Activated CD8-positive, alpha-beta T cell treated with anti-CD3 and anti-CD28 coated beads for 36 hours (primary cell): ENCODE measurements at regions of chr9 and their contacts with region 1.

Region 1: DNA sequence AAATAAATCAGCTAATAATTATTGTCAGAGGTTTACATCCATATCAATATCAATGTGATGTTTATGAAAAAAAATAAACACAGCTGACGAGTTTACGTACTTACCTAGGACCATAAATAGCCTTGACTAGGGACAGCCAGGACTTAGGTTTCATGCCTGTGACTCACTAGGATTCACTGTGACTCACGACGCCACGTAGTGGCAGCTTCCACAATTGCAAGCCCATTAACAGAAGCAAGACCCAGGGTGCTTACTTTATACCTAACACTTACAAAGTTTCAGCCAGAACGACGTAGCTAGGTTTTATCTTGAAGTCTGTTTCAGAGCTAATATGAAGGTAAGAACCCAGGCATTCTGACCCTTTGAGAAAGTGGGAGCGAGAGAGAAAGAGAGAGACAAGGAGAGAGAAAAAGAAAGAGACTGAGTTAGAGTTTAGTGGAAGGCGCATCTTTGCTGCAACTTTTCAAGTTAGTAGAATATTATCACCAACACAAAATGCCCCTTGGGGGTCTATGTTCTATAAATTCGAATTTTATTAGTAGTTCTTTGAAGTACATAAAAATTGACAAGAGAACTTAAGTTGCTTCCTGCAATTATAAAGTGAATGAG is 191.2 kb downstream of the GNA14 start:
- DNase-seq: peak; percentile 95
- ATAC-seq: peak; percentile 93
- H3K4me3 Mint-ChIP-seq: no peak overlapping the region
- H3K27ac Mint-ChIP-seq: no peak overlapping the region
- H3K4me1 Mint-ChIP-seq: peaks cover 13% of the 10 kb centered on the region
- H3K27me3 Mint-ChIP-seq: no peaks in the 10 kb centered on the region
- CTCF ChIP-seq: peak; percentile 84

Region 2: GRCh38 chr9:77194423-77194822 is 262.5 kb before region 1 on chr9:
- CTCF ChIA-PET with region 1: no interaction called
- POLR2A ChIA-PET with region 1: no interaction called
- intact Hi-C with region 1: no loop called
- DNase-seq: no peak
- ATAC-seq: no peak
- H3K4me3 Mint-ChIP-seq: no peak overlapping the region
- H3K27ac Mint-ChIP-seq: no peak overlapping the region
- H3K4me1 Mint-ChIP-seq: peaks cover 47% of the 10 kb centered on the region
- H3K27me3 Mint-ChIP-seq: no peaks in the 10 kb centered on the region
- CTCF ChIP-seq: no peak

Region 3: DNA sequence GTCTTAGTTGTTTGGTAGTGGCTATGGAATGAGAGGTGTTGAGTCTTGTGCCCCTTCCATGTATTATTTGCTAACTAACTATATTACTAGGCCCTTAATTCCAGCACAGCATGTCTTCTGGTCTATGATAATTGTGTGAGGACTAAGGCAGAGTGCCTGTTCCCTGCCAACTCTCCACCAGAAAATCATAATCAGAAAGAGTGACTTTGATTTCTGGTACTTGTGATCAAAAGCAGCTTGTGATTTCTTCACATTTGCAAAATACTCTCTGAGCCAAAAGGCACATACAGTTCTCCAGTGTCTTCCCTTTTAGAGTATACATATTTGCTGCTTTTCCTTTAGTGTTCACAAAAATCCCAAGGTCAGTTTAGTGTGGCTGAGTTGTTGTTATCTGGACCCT is 38.7 kb before region 1 on chr9:
- CTCF ChIA-PET with region 1: interaction called, 10 read pairs
- POLR2A ChIA-PET with region 1: no interaction called
- intact Hi-C with region 1: no loop called
- DNase-seq: no peak
- ATAC-seq: no peak
- H3K4me3 Mint-ChIP-seq: no peak overlapping the region
- H3K27ac Mint-ChIP-seq: no peak overlapping the region
- H3K4me1 Mint-ChIP-seq: no peaks in the 10 kb centered on the region
- H3K27me3 Mint-ChIP-seq: no peaks in the 10 kb centered on the region
- CTCF ChIP-seq: no peak

Region 4: DNA sequence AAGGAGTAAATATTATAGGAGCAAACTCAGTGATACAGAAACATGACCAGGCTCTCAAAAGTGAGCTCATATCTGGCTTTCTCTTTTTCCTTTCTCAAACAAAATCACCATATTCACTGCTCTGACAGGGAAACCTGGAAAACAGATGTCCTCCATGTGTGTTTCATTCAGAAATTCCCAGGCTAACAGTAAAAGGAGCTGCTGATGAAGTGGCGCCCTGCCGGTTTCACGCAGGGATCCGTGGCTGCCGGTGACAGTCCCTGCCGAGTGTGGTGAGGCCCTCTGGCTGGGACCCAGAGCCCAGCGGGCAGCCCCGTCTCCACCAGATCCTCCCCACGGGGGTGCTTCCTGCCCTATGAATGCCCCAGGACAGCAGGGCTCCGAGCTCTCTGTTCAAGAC is 16.9 kb before region 1 on chr9:
- CTCF ChIA-PET with region 1: interaction called, 58 read pairs
- POLR2A ChIA-PET with region 1: interaction called, 4 read pairs
- intact Hi-C with region 1: no loop called
- DNase-seq: no peak
- ATAC-seq: no peak
- H3K4me3 Mint-ChIP-seq: no peak overlapping the region
- H3K27ac Mint-ChIP-seq: no peak overlapping the region
- H3K4me1 Mint-ChIP-seq: no peaks in the 10 kb centered on the region
- H3K27me3 Mint-ChIP-seq: peaks cover 1% of the 10 kb centered on the region
- CTCF ChIP-seq: no peak

Region 5: DNA sequence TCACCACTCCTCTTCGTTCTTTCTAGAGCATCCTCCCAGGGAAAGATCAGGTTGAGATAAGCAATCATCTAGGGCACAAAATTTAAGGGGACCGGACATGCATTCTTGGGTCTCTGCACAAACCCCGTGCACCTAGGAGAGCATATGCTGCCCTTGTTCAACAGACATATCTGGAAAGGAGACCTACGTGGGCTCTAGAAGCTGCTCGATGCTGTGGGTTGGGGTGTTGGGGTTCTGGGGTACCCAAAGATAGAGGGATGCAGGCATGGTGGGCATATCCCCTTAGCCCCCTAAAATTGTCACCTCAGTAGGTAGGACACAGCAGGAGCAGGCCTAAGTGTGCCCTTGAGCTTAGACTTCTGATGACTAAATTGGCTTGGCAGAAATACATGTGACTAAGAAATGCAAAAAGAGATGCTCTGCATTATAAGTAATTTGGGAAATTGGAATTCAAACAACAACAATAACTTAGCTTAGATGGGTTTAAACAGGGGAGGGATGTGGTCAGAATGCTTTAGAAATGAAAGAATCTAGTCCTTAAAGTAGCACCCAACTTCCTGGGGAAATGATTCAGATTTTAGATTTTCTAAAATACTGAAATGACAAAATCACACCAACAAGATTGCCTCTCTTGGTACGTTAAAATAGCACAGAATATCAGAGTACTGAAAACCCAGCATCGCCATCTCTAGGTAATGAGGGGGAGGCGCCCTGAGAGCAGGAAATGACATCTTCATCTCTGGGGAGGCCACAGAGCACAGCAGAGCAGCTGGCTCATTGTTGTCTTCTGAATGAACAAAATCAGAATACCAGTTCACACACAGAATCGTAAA is 18.9 kb after region 1 on chr9:
- CTCF ChIA-PET with region 1: interaction called, 115 read pairs
- POLR2A ChIA-PET with region 1: interaction called, 4 read pairs
- intact Hi-C with region 1: no loop called
- DNase-seq: peak; percentile 82
- ATAC-seq: peak; percentile 99
- H3K4me3 Mint-ChIP-seq: peak overlapping the region; percentile 43
- H3K27ac Mint-ChIP-seq: peak overlapping the region; percentile 98
- H3K4me1 Mint-ChIP-seq: peaks cover 27% of the 10 kb centered on the region
- H3K27me3 Mint-ChIP-seq: no peaks in the 10 kb centered on the region
- CTCF ChIP-seq: no peak

Region 6: DNA sequence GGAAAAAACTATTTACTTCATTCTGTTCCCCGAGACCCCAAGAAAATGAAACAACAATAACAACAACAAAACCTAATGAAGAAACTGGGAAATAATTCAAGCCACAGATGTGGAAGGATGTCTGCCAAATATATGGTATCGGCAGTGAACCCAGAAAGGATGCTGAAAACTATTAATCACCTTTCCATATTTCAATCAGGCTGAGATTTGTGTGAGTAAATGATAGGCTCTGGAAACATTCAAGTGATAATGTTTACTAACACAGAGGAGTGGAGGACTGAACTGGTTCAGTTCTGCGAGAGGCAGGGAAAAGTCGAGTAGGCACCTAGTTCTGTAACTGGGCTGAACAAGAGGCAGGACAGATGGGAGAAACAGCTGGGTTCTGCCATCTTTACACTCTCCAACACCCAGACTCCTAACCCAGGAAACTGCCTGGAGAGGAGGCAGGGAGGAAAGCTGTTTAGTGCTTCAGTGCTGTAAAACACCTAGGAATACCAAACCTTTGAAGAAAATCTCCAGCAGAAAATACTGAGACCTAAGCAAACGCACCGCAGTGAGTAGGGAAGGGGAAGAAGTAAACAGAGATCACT is 288.0 kb after region 1 on chr9:
- CTCF ChIA-PET with region 1: interaction called, 28 read pairs
- POLR2A ChIA-PET with region 1: no interaction called
- intact Hi-C with region 1: loop called (anchors 2 kb)
- DNase-seq: no peak
- ATAC-seq: no peak
- H3K4me3 Mint-ChIP-seq: no peak overlapping the region
- H3K27ac Mint-ChIP-seq: peak overlapping the region; percentile 69
- H3K4me1 Mint-ChIP-seq: peaks cover 48% of the 10 kb centered on the region
- H3K27me3 Mint-ChIP-seq: no peaks in the 10 kb centered on the region
- CTCF ChIP-seq: no peak